Panc1 (cell line): ENCODE measurements at regions of chr19 and their contacts with region 1.

Region 1: GRCh38 chr19:5403968-5404640 is 51.1 kb upstream of the ZNRF4 start:
- DNase-seq: peak; percentile 2
- ATAC-seq: peak; percentile 95
- H3K4me3 ChIP-seq: no peak overlapping the region
- H3K27ac ChIP-seq: no peak overlapping the region
- H3K4me1 ChIP-seq: no peaks in the 10 kb centered on the region
- H3K27me3 ChIP-seq: no peaks in the 10 kb centered on the region; the same call in 1 of the 2 replicates
- CTCF ChIP-seq: no peak

Region 2: DNA sequence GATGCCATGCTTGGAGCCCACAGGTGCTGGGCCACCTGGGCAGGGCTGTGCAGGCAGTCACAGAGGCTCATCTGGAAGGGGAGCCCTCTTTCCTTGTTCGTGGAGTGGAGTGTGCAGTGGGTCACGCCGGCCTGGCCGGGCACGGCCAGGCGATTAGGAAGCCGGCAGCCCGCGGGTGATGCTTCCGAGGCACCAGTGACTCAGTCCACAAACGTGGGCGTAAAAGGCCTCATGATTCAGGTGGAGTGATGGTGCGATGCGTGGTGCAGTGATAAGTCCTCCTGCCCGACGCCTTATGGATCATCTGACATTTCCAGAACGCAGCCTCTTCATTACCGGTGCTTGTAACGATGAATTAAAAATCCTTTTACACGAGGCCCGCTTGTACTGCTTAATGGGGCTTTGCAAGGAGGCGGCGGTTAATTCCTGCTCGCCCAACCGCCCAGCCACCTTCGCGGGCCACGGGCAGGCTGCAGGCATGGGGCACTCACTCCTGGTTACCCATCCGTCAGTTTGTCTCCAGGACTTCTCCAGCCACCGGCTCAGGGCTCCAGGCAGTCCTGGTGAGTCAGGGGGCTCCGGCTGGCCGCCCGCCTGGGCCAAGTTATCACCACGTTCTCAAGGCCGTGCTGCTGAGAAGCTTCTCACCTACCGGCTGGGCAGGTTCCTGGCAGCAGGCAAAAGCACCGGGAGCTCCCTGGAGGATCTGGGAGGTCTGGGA is 262.8 kb before region 1 on chr19:
- CTCF ChIA-PET with region 1: no interaction called
- POLR2A ChIA-PET with region 1: interaction called, 10 read pairs
- in situ Hi-C with region 1: no loop called
- intact Hi-C with region 1: no loop called
- DNase-seq: no peak
- ATAC-seq: no peak
- H3K4me3 ChIP-seq: no peak overlapping the region
- H3K27ac ChIP-seq: no peak overlapping the region
- H3K4me1 ChIP-seq: no peaks in the 10 kb centered on the region
- H3K27me3 ChIP-seq: no peaks in the 10 kb centered on the region
- CTCF ChIP-seq: no peak